ENCODE measurements at regions of chr2 and their contacts with region 1.

Region 1: GRCh38 chr2:181305301-181306123 is 151.7 kb upstream of the ITGA4 start:
- DNase-seq: peak; percentile 93
- H3K4me3 ChIP-seq: peak overlapping the region; percentile 56
- H3K27ac ChIP-seq: peak overlapping the region; percentile 98
- H3K4me1 ChIP-seq: peaks cover 66% of the 10 kb centered on the region
- CTCF ChIP-seq: no peak

Region 2: GRCh38 chr2:180980106-180980942 is 325.2 kb before region 1 on chr2 and contains the start of gene UBE2E3:
- CTCF ChIA-PET with region 1: no interaction called
- POLR2A ChIA-PET with region 1: interaction called, 3 read pairs
- intact Hi-C with region 1: loop called (anchors 5 kb)
- DNase-seq: peak; percentile 81
- H3K4me3 ChIP-seq: peak within 1 kb of the TSS; percentile 88
- H3K27ac ChIP-seq: no peak within 1 kb of the TSS
- H3K4me1 ChIP-seq: peaks cover 38% of the 10 kb centered on the region
- CTCF ChIP-seq: peak; percentile 73
- total RNA-seq, gene UBE2E3: 26.4 and 33.7 TPM in 2 replicates

Region 3: DNA sequence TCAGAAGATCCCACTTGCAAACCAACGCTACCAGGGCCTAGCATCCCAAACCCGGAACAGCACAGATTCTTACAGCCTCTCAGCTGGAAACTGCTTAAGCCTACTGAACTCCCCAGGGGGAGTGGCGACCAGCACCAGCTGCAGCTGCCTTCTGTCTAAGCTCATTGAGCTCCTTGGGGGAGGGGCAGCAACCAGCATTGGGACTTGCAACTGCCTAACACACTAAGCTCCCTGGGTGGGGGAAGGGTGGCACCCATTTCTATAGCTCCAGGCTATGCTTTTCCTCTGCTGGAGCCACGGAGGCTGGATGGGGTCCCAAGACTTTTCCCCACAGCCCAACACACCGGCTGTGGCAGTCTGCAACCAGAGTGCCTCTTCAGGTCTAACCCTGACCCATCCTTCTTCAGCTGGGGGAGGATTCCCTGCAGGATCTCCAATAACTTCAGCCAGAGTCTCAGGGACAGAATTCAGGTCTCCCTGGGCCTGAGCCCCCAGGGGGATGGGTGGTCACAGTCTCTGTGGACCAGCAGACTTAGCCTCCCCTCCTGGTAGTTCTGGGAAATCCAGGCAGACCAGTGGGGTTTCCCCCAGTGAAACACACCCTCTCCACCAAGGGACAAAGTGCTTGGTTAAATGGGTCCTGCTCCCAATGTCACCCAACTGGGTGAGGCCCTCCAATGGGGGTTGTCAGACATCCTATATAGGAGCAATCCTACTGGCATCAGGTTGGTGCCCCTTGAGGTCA is 105.8 kb after region 1 on chr2:
- CTCF ChIA-PET with region 1: interaction called, 3 read pairs
- POLR2A ChIA-PET with region 1: interaction called, 72 read pairs
- intact Hi-C with region 1: loop called (anchors 1 kb)
- DNase-seq: peak; percentile 100
- H3K4me3 ChIP-seq: peak overlapping the region; percentile 42
- H3K27ac ChIP-seq: peak overlapping the region; percentile 71
- H3K4me1 ChIP-seq: peaks cover 57% of the 10 kb centered on the region
- CTCF ChIP-seq: peak; percentile 14; the same call in 1 of the 2 replicates

Region 4: DNA sequence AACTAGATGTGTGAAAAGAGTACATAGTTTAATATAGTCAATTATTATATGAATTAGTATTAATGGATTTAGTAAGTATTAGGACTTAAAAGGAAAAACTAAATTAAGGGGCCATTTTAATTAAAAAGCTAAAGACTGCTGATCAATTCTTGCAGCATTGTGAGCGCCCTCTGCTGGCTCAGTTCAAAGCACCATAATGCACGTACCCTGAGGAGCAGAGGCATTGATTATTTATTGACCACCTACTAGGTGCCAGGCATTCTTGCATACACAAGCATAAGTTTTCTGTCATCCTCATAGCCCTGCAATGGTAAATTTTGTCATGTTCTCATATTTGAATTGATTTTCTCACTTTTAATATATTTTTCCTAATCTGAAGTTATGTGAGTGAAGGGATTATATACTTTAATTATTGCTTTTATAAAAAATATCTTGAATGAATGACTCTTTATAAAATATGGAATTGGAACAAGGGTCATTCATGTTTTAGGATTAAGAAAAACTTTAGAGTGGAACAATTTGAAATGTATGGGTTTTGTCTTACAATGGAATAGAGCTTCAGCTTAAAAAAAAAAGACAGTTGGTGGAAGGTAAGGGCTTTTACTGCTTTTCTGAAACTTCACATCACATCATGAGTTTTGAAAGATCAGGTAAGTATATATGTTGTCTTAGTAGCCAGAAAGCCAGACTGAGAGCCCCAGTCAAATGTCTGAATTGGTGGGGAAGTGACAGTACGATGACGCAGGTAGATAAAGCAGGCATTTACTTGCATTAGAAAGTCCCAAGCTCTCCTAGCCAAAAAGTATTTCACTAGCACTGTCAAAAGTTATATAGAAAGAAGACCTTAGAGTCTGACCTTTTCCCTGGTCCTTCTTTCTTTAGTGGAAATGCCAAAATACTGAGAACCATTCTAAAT is 161.4 kb after region 1 on chr2:
- CTCF ChIA-PET with region 1: interaction called, 4 read pairs
- POLR2A ChIA-PET with region 1: interaction called, 14 read pairs
- intact Hi-C with region 1: loop called (anchors 2 kb)
- DNase-seq: peak; percentile 80
- H3K4me3 ChIP-seq: no peak overlapping the region
- H3K27ac ChIP-seq: no peak overlapping the region
- H3K4me1 ChIP-seq: peaks cover 13% of the 10 kb centered on the region
- CTCF ChIP-seq: peak; percentile 98

Region 5: DNA sequence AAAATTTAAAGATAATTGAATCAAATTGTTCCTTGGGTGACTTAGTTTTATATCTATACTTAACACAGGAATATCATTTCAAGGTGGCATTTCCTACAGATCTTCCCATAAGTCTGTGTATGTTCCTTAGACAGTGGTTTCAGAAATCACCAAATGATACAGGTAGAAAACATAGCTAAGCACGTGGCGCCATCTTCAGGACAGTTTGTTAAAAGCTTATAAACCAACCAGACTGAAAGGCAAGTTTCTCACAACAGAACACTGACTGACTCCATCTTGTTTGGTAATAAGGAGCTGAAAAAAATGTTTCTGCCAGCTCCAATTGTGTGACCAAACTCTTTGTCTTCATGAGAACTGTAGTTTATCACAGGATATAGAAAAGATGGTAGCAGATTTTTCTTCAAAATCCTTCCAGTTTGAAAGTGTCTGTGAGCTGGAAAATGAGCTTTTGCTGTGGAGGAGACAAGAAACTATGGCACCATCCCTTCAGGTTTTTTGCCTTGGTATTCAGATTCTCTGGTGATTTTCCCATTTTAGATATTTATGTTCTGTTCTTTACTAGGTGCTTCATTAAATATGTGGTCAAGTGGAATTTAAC is 409.6 kb after region 1 on chr2:
- CTCF ChIA-PET with region 1: interaction called, 4 read pairs
- POLR2A ChIA-PET with region 1: interaction called, 3 read pairs
- intact Hi-C with region 1: loop called (anchors 1 kb)
- DNase-seq: peak; percentile 78
- H3K4me3 ChIP-seq: no peak overlapping the region
- H3K27ac ChIP-seq: no peak overlapping the region
- H3K4me1 ChIP-seq: no peaks in the 10 kb centered on the region
- CTCF ChIP-seq: peak; percentile 92

Region 6: DNA sequence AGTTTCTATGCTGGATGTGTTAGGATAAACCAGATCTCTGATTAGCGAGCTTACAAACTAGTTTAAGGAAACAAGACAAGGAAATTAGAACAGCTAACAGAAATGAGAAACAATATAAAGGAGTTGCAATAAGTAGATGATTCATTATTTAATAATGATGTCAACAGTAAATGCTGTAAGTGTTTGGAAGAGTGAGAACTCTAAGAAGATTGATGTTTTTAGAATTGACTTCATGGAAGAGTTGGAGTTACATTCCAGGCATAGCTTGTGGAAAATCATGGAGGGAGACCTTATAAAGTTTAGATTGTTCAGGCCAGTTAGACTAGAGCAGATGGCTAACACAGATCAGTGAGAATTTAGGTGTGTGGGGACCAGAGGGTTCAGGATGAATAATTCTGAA is 712.7 kb after region 1 on chr2:
- CTCF ChIA-PET with region 1: no interaction called
- POLR2A ChIA-PET with region 1: no interaction called
- intact Hi-C with region 1: no loop called
- DNase-seq: no peak
- H3K4me3 ChIP-seq: no peak overlapping the region
- H3K27ac ChIP-seq: no peak overlapping the region
- H3K4me1 ChIP-seq: no peaks in the 10 kb centered on the region
- CTCF ChIP-seq: no peak

Measured in OCI-LY7 (cell line).